ENCODE measurements at regions of chr16 and their contacts with region 1.

Region 1: DNA sequence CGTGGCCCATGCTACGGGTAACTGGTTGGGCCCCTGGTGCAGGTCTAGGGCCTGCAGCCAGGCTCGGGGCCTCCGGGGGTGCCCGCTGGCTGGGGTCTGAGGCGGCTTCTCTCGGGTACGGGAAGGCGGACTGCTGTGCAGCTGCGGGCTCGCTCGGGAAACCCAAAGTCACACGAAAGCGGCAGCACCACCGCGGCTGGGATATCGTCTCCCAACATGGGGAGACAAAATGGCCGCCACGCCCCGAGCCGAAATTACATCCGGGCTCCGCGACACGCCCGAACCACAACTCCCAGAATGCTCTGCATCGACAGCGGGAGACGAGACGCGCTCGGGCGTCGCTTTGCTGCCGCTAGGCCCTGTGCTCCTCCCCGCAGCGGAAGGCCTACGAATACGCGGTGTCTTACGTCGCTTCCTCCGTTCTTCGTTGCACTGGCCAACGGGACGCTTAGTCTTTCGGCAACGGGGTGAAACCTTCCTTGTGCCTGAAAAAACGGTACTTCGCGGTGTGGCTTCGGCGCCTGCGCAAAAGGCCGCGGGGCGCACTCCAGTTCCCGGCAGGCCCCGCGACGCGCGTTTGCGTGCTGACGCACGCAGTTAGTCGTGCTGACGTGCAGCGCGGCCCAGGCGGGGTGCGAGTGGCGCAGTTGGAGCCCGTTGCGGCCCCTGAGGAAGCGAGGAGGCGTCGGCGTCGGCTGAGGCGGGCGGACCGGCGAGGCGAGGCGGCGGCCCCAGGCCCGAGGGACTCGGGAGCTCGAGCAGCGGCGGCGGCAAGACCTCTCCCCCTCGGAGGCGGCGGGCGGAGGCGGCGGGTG is at the start of gene SRRM2:
- DNase-seq: peak; percentile 97
- ATAC-seq: peak; percentile 90
- H3K4me3 Mint-ChIP-seq: peak within 1 kb of the TSS; percentile 99
- H3K27ac Mint-ChIP-seq: peak within 1 kb of the TSS; percentile 98
- H3K4me1 Mint-ChIP-seq: peaks cover 45% of the 10 kb centered on the region
- H3K27me3 Mint-ChIP-seq: no peaks in the 10 kb centered on the region
- total RNA-seq, gene SRRM2: 517 to 598 TPM

Region 2: GRCh38 chr16:1826691-1827575 is 925.3 kb before region 1 on chr16 and contains the starts of genes FAHD1 and HAGH:
- CTCF ChIA-PET with region 1: no interaction called
- POLR2A ChIA-PET with region 1: no interaction called
- intact Hi-C with region 1: loop called in 1 of 2 experiments (anchors 2 kb)
- DNase-seq: peak; percentile 93
- ATAC-seq: peak; percentile 90
- H3K4me3 Mint-ChIP-seq: peak within 1 kb of the TSS; percentile 91
- H3K27ac Mint-ChIP-seq: peak within 1 kb of the TSS; percentile 89
- H3K4me1 Mint-ChIP-seq: peaks cover 27% of the 10 kb centered on the region
- H3K27me3 Mint-ChIP-seq: no peaks in the 10 kb centered on the region
- total RNA-seq, gene FAHD1: 11.6 to 11.9 TPM
- total RNA-seq, gene HAGH: 20.9 to 25.0 TPM

Region 3: DNA sequence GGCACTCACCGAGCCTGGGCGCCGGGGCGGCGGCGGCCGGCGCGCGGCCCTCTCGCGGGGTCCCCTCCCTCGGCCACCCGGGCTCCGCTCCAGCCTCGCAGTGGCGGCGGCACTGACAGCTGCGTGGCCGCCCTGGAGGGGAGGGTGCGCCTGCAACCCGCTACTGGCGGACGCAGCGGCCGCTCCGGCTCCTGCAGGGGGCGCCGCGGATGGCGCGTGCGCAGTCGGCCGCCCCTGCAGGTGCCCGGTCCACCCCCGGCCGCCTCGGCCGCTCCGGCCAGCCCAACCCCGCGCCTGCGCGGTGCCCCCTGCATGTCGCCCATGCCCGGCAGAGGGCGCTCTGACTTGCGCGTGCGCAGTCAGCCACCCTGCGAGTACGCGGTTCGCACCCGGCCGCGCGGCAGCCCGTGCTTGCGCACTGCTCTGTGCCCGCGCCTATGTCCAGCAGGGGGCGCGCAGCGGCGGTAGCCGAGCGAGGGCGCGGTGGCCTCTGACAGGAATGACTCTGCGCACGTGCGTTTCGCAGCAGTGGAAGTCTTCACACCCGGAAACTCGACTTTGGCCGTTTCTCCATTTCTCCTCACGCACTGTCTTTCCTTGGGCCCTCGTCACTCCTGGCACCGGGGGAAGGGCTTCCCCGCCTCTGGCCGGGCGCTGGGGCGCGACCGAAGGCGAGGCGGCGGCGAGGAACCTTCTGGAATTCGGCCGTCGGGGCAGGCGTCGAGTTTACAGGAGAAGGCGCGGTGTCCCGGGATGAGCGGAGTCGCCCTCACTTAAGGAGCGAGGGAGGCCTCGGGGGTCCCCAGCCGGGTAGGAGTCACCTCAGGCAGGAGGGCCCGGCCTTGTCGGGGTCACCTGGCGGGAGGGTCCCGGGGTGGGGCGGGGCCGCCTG is 411.4 kb before region 1 on chr16 and contains the start of gene ABCA3:
- CTCF ChIA-PET with region 1: no interaction called
- POLR2A ChIA-PET with region 1: no interaction called
- intact Hi-C with region 1: loop called in 1 of 2 experiments (anchors 1 kb)
- DNase-seq: peak; percentile 97
- ATAC-seq: peak; percentile 92
- H3K4me3 Mint-ChIP-seq: peak within 1 kb of the TSS; percentile 82
- H3K27ac Mint-ChIP-seq: peak within 1 kb of the TSS; percentile 21
- H3K4me1 Mint-ChIP-seq: peaks cover 13% of the 10 kb centered on the region
- H3K27me3 Mint-ChIP-seq: peaks cover 7% of the 10 kb centered on the region
- total RNA-seq, gene ABCA3: 6.0 to 7.2 TPM

Region 4: DNA sequence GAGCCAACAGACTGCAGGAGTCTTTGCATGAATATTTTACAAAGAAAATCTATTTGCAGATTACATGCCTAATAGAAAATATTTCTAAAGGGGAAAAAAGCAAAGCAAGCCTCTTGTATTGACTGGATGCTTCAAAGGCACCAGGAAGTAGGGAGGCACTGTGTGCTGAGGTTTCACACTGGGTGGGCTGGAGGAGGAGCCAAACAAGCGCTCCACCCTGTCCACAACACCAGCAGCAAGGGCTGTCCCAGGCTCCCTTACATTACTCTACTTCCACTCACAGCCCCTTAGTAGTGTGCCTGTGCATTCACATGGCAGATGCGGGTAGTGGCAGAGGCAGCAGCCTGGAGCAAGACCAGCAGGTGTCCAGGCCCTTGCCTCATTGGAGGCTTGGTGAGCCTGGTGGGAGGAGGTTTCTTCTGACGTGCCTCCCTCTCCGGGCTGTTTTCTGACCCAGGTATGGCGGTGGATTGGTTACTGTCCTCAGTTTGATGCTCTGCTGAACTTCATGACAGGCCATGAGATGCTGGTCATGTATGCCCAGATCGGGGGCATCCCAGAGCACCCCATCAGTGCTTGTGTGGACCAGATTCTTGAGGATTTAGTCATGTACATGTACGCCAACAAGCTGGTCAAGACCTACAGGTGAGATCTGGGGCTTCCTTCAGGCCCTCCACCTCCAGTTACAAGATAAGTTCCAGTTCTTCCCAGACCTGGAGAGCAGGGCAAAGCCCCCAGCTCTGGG is 329.9 kb before region 1 on chr16:
- CTCF ChIA-PET with region 1: no interaction called
- POLR2A ChIA-PET with region 1: no interaction called
- intact Hi-C with region 1: no loop called
- DNase-seq: no peak
- ATAC-seq: no peak
- H3K4me3 Mint-ChIP-seq: no peak overlapping the region
- H3K27ac Mint-ChIP-seq: no peak overlapping the region
- H3K4me1 Mint-ChIP-seq: peaks cover 2% of the 10 kb centered on the region
- H3K27me3 Mint-ChIP-seq: peaks cover under 1% of the 10 kb centered on the region

Region 5: GRCh38 chr16:2673066-2673999 is 78.9 kb before region 1 on chr16:
- CTCF ChIA-PET with region 1: no interaction called
- POLR2A ChIA-PET with region 1: no interaction called
- intact Hi-C with region 1: loop called in 1 of 2 experiments (anchors 1 kb)
- DNase-seq: peak; percentile 98
- ATAC-seq: peak; percentile 97
- H3K4me3 Mint-ChIP-seq: peak overlapping the region; percentile 73
- H3K27ac Mint-ChIP-seq: peak overlapping the region; percentile 47
- H3K4me1 Mint-ChIP-seq: peaks cover 28% of the 10 kb centered on the region
- H3K27me3 Mint-ChIP-seq: no peaks in the 10 kb centered on the region

Region 6: GRCh38 chr16:2768403-2769089 is 16.3 kb after region 1 on chr16:
- CTCF ChIA-PET with region 1: interaction called, 3 read pairs
- POLR2A ChIA-PET with region 1: interaction called, 26 read pairs
- intact Hi-C with region 1: no loop called
- DNase-seq: no peak
- ATAC-seq: no peak
- H3K4me3 Mint-ChIP-seq: no peak overlapping the region
- H3K27ac Mint-ChIP-seq: no peak overlapping the region
- H3K4me1 Mint-ChIP-seq: peaks cover 7% of the 10 kb centered on the region
- H3K27me3 Mint-ChIP-seq: no peaks in the 10 kb centered on the region

Region 7: GRCh38 chr16:2883027-2883851 is 131.0 kb after region 1 on chr16 and contains the start of gene FLYWCH2:
- CTCF ChIA-PET with region 1: interaction called, 3 read pairs
- POLR2A ChIA-PET with region 1: no interaction called
- intact Hi-C with region 1: loop called in 1 of 2 experiments (anchors 1 kb)
- DNase-seq: peak; percentile 99
- ATAC-seq: peak; percentile 84
- H3K4me3 Mint-ChIP-seq: peak within 1 kb of the TSS; percentile 85
- H3K27ac Mint-ChIP-seq: peak within 1 kb of the TSS; percentile 92
- H3K4me1 Mint-ChIP-seq: peaks cover 10% of the 10 kb centered on the region
- H3K27me3 Mint-ChIP-seq: no peaks in the 10 kb centered on the region
- total RNA-seq, gene FLYWCH2: 16.8 to 17.3 TPM

Measured in activated CD4-positive, alpha-beta T cell treated with anti-CD3 and anti-CD28 coated beads for 36 hours (primary cell).